Activated naive CD4-positive, alpha-beta T cell treated with anti-CD3 and anti-CD28 coated beads, Interleukin-2, amount 10 ng/mL, durations not matched to agents 7 days and 5 days (primary cell): ENCODE measurements at regions of chr10 and their contacts with region 1.

Region 1: GRCh38 chr10:60114765-60115586 is 208.6 kb upstream of the CCDC6 start:
- DNase-seq: peak; percentile 23
- H3K4me3 Mint-ChIP-seq: no peak overlapping the region
- H3K27ac Mint-ChIP-seq: no peak overlapping the region
- H3K4me1 Mint-ChIP-seq: no peaks in the 10 kb centered on the region
- H3K27me3 Mint-ChIP-seq: no peaks in the 10 kb centered on the region

Region 2: GRCh38 chr10:59633063-59633462 is 481.9 kb before region 1 on chr10:
- CTCF ChIA-PET with region 1: no interaction called
- DNase-seq: no peak
- H3K4me3 Mint-ChIP-seq: no peak overlapping the region
- H3K27ac Mint-ChIP-seq: no peak overlapping the region
- H3K4me1 Mint-ChIP-seq: no peaks in the 10 kb centered on the region
- H3K27me3 Mint-ChIP-seq: peaks cover 19% of the 10 kb centered on the region

Region 3: GRCh38 chr10:60140651-60141632 is 26.0 kb after region 1 on chr10:
- CTCF ChIA-PET with region 1: no interaction called
- DNase-seq: no peak
- H3K4me3 Mint-ChIP-seq: no peak overlapping the region
- H3K27ac Mint-ChIP-seq: no peak overlapping the region
- H3K4me1 Mint-ChIP-seq: no peaks in the 10 kb centered on the region
- H3K27me3 Mint-ChIP-seq: no peaks in the 10 kb centered on the region

Region 4: DNA sequence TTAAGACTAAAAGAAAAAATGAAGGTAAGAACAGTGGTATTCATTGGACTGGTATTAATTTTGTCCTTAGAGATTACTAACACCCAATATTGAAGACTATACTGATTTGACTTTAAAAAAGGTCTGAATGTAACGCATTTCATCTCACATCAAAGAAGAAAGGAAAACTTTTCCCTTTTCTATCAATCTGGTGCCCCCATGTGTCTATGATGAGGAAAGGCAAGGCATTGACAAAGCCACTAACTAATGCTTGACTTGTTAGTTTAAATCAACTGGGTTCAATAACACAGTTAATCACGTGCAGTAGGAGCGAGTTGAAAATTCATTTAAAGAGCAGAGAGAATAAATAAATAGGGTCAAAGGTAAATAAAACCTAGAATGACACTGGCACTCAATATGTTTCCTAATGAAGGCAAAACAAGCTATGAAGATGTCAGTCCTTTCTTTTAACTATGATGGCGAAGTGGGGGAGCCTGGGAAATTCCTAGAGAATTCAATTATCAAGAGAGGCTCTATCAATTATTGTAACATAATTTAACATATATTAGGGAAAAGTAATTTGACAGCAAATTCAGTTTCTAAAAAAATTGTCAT is 93.8 kb after region 1 on chr10:
- CTCF ChIA-PET with region 1: interaction called, 21 read pairs
- DNase-seq: no peak
- H3K4me3 Mint-ChIP-seq: no peak overlapping the region
- H3K27ac Mint-ChIP-seq: no peak overlapping the region
- H3K4me1 Mint-ChIP-seq: peaks cover 31% of the 10 kb centered on the region
- H3K27me3 Mint-ChIP-seq: no peaks in the 10 kb centered on the region